ENCODE measurements at regions of chr6 and their contacts with region 1.

Region 1: GRCh38 chr6:119147101-119148053 is 68.9 kb upstream of the FAM184A start:
- DNase-seq: peak; percentile 60
- ATAC-seq: peak; percentile 93
- H3K4me3 ChIP-seq: 0 out of 2 replicates have a peak overlapping the region, but pooled peaks have one; percentile 31
- H3K27ac ChIP-seq: peak overlapping the region; percentile 48; the same call in 1 of the 2 replicates
- H3K4me1 ChIP-seq: peaks cover 12% of the 10 kb centered on the region
- H3K27me3 ChIP-seq: no peaks in the 10 kb centered on the region; a peak in 2 of 4 replicates
- CTCF ChIP-seq: no peak
- EP300 ChIP-seq: peak in 1 of 2 experiments; percentile 43; a peak in 1 of 4 replicates
- POLR2A ChIP-seq: no peak
- RAD21 ChIP-seq: no peak

Region 2: DNA sequence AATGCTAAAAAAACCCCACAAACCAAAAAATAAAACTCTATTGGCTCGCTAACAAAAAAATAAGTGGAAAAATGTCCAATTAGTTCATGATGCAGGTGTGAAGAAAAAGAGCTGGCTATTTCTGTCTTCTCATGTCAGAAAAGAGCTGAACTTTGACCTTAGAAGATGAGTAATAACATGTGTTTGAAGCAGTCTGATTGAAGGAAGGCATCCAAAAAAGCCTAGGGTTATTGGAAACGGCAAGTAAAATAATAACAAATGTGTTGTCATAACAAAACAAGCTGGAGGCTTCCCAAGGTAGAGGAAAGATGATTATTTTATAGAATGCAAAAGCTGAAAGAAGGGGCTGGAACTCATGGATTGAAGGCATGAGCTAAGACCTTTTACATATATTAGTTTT is 25.4 kb after region 1 on chr6:
- CTCF ChIA-PET with region 1: interaction called, 20 read pairs
- POLR2A ChIA-PET with region 1: no interaction called
- RAD21 ChIA-PET with region 1: interaction called, 9 read pairs
- SMC1A ChIA-PET with region 1: interaction called, 10 read pairs
- in situ Hi-C with region 1: no loop called
- intact Hi-C with region 1: no loop called
- DNase-seq: no peak
- ATAC-seq: peak; percentile 46
- H3K4me3 ChIP-seq: no peak overlapping the region
- H3K27ac ChIP-seq: no peak overlapping the region
- H3K4me1 ChIP-seq: no peaks in the 10 kb centered on the region
- H3K27me3 ChIP-seq: no peaks in the 10 kb centered on the region
- CTCF ChIP-seq: no peak
- EP300 ChIP-seq: no peak
- POLR2A ChIP-seq: no peak
- RAD21 ChIP-seq: no peak

Region 3: DNA sequence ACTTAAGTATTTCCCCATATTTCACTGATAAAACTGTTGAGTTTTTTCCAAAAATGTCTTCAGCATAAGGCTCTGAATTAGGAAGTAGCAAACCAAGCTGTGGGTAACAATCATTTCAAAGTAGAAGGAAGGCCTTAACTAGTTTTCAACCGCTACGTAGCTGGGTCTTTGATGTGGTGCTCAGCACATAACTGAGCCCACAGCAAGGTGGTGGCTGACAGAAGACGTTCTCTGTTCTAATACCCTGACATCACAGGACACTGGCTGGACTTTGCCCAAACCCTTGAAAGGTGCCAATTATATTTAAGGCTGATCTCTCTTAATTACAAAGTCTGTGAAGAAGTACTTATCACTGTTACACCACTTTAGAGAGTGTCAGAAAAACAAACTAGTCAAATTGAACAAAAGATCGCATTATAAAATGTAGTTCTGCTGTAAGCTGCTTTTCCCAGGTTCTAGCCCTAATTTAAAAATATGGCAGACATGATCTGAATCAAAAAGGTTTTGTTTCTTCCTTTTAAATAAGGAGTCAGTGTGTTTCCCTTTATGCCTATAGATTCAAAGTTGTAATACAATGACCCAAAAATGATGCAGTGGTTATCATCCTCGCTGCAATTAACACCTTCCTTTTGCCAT is 175.5 kb after region 1 on chr6:
- CTCF ChIA-PET with region 1: interaction called, 13 read pairs
- POLR2A ChIA-PET with region 1: interaction called, 3 read pairs
- RAD21 ChIA-PET with region 1: interaction called, 4 read pairs
- SMC1A ChIA-PET with region 1: interaction called, 3 read pairs
- in situ Hi-C with region 1: no loop called
- intact Hi-C with region 1: no loop called
- DNase-seq: no peak
- ATAC-seq: peak; percentile 94
- H3K4me3 ChIP-seq: no peak overlapping the region
- H3K27ac ChIP-seq: no peak overlapping the region
- H3K4me1 ChIP-seq: no peaks in the 10 kb centered on the region
- H3K27me3 ChIP-seq: no peaks in the 10 kb centered on the region
- CTCF ChIP-seq: no peak
- EP300 ChIP-seq: no peak; a peak in 2 of 4 replicates
- POLR2A ChIP-seq: no peak
- RAD21 ChIP-seq: no peak

Region 4: DNA sequence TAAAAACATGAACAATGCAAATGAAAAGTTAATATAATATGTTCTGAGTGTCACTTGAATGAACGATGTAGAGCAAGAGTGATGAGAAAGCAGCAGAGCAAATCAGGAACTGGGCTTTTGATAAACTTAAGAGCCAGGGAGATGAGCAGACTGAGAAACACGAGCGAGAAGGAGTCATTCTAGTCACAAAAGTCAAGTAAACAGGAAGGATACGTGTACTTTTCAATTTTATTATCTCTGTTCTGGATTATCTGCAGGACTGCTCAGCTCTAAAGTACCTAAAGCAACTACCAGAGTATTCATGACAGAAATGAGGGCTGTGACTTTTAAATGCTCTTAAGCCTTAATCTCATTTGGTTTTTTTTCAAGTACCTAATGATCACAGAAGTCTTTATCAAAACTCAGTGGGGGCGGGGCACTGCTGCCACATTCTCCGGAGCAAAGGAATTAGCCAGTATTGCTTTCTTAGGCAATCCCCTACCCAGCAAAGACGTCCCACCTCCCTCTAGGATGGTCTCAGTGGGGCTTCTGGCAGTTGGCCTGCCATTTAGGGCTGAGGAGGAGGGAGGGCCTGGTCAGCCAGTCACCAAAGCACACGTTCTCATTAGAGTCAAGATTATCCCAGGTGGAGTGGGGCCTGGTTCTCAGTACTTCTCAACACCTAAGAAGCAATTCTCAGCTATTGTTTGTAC is 193.6 kb after region 1 on chr6:
- CTCF ChIA-PET with region 1: interaction called, 94 read pairs
- POLR2A ChIA-PET with region 1: interaction called, 3 read pairs
- RAD21 ChIA-PET with region 1: interaction called, 129 read pairs
- SMC1A ChIA-PET with region 1: interaction called, 88 read pairs
- in situ Hi-C with region 1: loop called (anchors 5 kb)
- intact Hi-C with region 1: no loop called
- DNase-seq: no peak
- ATAC-seq: peak; percentile 8
- H3K4me3 ChIP-seq: 0 out of 2 replicates have a peak overlapping the region, but pooled peaks have one; percentile 14
- H3K27ac ChIP-seq: peak overlapping the region; percentile 10; the same call in 1 of the 2 replicates
- H3K4me1 ChIP-seq: peaks cover 10% of the 10 kb centered on the region
- H3K27me3 ChIP-seq: no peaks in the 10 kb centered on the region
- CTCF ChIP-seq: no peak
- EP300 ChIP-seq: no peak
- POLR2A ChIP-seq: no peak
- RAD21 ChIP-seq: no peak

Region 5: DNA sequence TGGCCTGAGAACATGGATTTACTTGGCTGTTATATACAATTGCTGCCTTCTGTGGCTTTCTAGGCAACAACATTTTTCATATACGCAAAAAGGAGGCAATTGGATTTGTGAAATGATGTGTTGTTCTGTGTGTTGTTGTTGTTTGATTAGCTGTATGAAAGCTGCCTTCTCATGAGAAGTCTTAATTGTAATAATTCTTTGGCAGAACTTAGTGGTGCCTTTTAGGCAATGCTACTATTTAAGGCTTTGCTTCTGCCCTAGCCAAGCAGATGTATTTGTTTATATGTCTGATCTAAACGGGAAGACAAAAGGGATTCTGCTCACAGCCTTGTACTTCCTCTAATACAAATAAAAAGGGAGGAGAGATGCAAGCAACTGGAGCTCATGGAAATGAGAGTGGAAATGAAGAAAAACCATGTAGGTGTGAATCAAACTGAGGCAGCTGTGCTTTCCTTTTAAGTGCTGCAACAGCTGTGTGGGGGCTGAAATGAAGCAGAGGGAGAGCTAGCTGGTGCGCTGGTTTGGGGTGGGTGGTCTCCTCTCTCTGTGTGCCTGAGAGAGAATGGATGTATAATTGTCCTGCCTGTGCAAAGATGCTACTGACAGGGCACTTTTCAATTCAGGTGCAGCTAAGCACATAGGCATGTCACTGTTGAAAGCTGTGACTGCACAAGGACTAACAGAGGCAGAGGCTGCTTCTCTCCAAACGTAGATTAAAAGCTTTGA is 589.1 kb after region 1 on chr6:
- CTCF ChIA-PET with region 1: interaction called, 5 read pairs
- POLR2A ChIA-PET with region 1: no interaction called
- RAD21 ChIA-PET with region 1: interaction called, 4 read pairs
- SMC1A ChIA-PET with region 1: interaction called, 3 read pairs
- in situ Hi-C with region 1: no loop called
- intact Hi-C with region 1: loop called (anchors 5 kb)
- DNase-seq: no peak
- ATAC-seq: no peak
- H3K4me3 ChIP-seq: no peak overlapping the region
- H3K27ac ChIP-seq: no peak overlapping the region
- H3K4me1 ChIP-seq: no peaks in the 10 kb centered on the region
- H3K27me3 ChIP-seq: no peaks in the 10 kb centered on the region; a peak in 1 of 4 replicates
- CTCF ChIP-seq: no peak
- EP300 ChIP-seq: no peak
- POLR2A ChIP-seq: no peak
- RAD21 ChIP-seq: no peak

Region 6: DNA sequence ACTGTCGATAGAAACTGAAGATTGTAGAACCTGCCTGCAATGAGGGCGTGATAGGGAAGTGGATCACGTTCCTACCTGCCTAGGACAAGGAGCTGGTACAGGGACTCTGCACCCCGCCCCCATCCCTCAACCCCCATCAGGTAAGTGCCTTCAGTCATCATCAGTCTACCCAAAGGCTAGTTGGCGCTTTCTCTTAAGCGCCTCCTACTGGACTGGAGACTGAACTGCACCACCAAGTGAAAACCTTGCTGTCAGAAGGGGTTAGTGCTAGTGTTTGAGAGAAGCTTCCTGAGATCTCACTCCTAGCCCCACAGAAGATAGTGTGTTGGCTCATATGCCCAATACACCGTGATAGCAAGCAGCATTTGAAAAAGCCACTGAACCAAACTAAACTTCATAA is 908.7 kb after region 1 on chr6:
- CTCF ChIA-PET with region 1: interaction called, 7 read pairs
- POLR2A ChIA-PET with region 1: no interaction called
- RAD21 ChIA-PET with region 1: interaction called, 3 read pairs
- SMC1A ChIA-PET with region 1: no interaction called
- in situ Hi-C with region 1: no loop called
- intact Hi-C with region 1: loop called (anchors 5 kb)
- DNase-seq: no peak
- ATAC-seq: peak; percentile 75
- H3K4me3 ChIP-seq: no peak overlapping the region
- H3K27ac ChIP-seq: no peak overlapping the region
- H3K4me1 ChIP-seq: no peaks in the 10 kb centered on the region
- H3K27me3 ChIP-seq: no peaks in the 10 kb centered on the region
- CTCF ChIP-seq: peak; percentile 42 to 73 (median 63)
- EP300 ChIP-seq: no peak
- POLR2A ChIP-seq: no peak
- RAD21 ChIP-seq: peak; percentile 49

Measured in GM12878 (cell line).